Activated CD4-positive, alpha-beta T cell treated with anti-CD3 and anti-CD28 coated beads for 36 hours (primary cell): ENCODE measurements at regions of chr10 and their contacts with region 1.

Region 1: DNA sequence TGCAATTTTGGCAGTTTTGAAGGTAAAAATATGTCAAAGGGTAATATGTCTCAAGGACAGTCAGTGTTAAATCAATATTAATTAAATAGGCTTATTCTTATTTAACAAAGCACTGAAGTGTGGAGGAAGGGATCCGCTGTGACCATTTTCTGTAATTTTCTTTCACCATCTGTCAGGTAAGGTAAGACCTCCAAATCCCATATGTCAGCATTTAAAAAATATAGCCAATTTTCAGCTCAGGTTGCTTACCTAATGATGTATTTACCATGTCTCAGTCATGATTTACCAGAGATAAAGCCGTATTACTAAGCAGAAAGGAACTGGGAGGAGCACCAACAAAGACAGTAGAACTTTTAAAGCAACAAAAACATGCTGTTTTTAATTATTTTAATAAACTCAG is 683.9 kb downstream of the CCSER2 start:
- DNase-seq: no peak
- ATAC-seq: no peak
- H3K4me3 Mint-ChIP-seq: no peak overlapping the region
- H3K27ac Mint-ChIP-seq: no peak overlapping the region
- H3K4me1 Mint-ChIP-seq: no peaks in the 10 kb centered on the region
- H3K27me3 Mint-ChIP-seq: peaks cover 2% of the 10 kb centered on the region

Region 2: GRCh38 chr10:84988011-84988410 is 24.3 kb before region 1 on chr10:
- CTCF ChIA-PET with region 1: no interaction called
- POLR2A ChIA-PET with region 1: interaction called, 13 read pairs
- intact Hi-C with region 1: no loop called
- DNase-seq: no peak
- ATAC-seq: no peak
- H3K4me3 Mint-ChIP-seq: no peak overlapping the region
- H3K27ac Mint-ChIP-seq: no peak overlapping the region
- H3K4me1 Mint-ChIP-seq: no peaks in the 10 kb centered on the region
- H3K27me3 Mint-ChIP-seq: peaks cover 2% of the 10 kb centered on the region